A549 (cell line): ENCODE measurements at regions of chr5 and their contacts with region 1.

Region 1: DNA sequence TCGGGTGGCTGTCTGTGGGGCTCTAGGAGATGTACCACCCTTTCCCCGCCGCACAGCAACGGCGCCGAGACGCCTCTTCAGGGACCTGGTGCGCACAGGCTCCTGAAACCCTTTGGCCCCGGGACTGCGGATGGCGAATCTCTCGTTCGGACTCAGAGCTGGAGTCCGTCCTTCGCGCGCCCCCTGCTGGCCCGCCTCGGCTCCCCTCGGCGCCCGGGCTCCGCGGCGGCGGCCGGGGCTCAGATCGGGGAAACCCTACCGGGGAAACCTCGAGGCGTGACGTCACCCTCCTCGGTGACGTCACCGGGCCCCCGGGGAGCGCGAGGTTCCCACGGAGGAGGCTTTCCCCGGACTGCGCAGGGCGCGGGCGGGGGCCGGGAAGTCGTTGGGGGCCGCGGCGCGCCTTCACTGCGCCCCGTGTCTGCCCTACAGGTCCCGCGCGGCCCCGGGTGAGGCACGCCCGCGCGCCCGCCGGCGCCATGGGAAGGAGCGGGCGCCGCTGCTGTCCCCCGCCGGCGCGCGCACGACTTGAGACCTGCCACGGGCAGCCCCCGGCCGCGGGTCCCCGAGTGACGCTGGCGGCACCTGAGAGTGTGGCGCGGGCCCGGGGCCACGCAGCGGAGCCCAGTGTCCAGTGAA is 7.9 kb downstream of the PRR7 start:
- DNase-seq: peak; percentile 89 to 99
- ATAC-seq: peak; percentile 37 to 63
- H3K4me3 ChIP-seq: peak overlapping the region; percentile 61
- H3K27ac ChIP-seq: peak overlapping the region; percentile 71 to 86
- H3K4me1 ChIP-seq: peaks cover 10% of the 10 kb centered on the region
- CTCF ChIP-seq: peak; percentile 94
- EP300 ChIP-seq: no peak
- POLR2A ChIP-seq: no peak
- RAD21 ChIP-seq: peak; percentile 72 to 92

Region 2: GRCh38 chr5:177317959-177318377 is 136.5 kb before region 1 on chr5:
- CTCF ChIA-PET with region 1: interaction called, 17 read pairs
- POLR2A ChIA-PET with region 1: no interaction called
- DNase-seq: peak; percentile 79 to 82
- ATAC-seq: peak; percentile 51 to 76; a peak in 5 of 6 replicates
- H3K4me3 ChIP-seq: no peak overlapping the region
- H3K27ac ChIP-seq: no peak overlapping the region
- H3K4me1 ChIP-seq: peaks cover 2% of the 10 kb centered on the region; the same call in 2 of the 3 replicates
- CTCF ChIP-seq: peak; percentile 96
- EP300 ChIP-seq: no peak
- POLR2A ChIP-seq: no peak
- RAD21 ChIP-seq: peak; percentile 88 to 92

Region 3: DNA sequence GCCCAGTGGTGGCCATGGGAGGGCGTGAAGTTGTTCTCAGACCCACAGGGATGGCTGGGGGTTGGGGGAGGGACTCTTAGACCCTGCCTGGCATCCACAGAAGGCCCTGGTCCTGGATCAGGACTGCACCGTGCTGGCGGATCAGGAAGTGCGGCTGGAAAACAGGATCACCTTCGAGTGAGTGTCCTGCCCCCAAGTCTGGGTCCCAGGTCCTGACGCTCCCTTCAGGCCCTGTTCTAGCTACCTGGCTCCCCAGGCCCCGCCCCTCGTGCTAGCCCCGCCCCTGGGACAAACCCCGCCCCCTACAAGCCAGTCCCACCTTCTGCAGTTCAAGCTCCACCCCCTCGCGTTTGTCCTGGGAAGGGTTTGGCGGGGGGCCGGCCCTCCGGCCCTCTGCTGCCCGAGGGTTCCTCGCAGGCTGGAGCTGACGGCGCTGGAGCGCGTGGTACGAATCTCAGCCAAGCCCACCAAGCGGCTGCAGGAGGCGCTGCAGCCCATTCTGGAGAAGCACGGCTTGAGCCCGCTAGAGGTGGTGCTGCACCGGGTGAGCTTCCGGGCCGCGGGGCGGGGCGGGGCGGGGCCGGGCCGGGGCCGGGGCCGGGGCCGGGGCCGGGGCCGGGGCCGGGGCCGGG is 83.9 kb before region 1 on chr5:
- CTCF ChIA-PET with region 1: interaction called, 30 read pairs
- POLR2A ChIA-PET with region 1: no interaction called
- DNase-seq: peak; percentile 89 to 95
- ATAC-seq: peak; percentile 79 to 88
- H3K4me3 ChIP-seq: peak overlapping the region; percentile 48
- H3K27ac ChIP-seq: peak overlapping the region; percentile 69 to 89
- H3K4me1 ChIP-seq: peaks cover 17% of the 10 kb centered on the region; the same call in 2 of the 3 replicates
- CTCF ChIP-seq: peak; percentile 51
- EP300 ChIP-seq: no peak
- POLR2A ChIP-seq: no peak
- RAD21 ChIP-seq: peak; percentile 58 to 68

Region 4: DNA sequence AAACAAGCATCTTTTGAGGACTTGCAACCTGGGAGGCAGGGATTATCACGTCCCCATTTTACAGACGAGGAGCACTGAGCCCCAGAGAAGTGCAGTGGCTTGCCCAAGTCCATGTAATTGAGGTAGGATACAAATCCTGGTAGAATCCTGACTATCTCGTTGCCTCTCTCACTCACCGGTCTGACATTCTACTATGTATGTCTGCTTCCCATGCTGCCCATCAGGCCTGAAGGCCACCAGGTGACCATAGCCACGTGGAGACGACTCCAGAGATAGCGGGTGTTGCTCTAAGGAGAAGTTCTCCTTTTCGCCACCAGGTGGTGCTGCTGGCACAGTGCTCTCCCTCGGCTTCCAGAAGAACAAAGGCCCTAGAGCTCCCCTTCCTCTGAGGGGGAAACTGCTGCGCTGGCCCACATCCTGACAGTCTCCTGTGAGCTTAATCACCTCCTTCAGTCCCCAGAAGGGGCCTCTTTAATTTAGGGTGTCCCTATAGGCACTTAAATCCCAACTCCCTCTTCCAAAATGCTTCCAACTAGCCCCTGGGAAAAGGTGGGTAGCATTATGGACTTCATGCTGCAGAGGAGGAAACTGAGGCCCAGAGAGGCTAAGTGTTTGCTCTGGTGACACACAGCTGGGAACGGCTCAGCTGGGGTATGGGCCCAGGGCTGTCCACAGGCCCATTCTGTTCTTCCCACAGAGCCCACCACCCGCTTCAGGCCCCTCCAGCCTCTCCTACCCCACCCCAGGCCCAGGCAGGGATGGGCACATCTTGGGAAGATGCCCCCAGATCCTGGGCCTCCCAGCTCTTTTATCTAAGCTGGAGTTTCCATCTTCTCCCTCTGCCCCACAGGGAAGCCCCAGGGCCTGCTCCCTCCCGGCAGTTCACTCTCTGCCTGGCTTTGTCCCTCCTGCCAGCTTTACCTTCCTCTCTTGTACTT is 63.9 kb before region 1 on chr5:
- CTCF ChIA-PET with region 1: interaction called, 359 read pairs
- POLR2A ChIA-PET with region 1: no interaction called
- DNase-seq: peak; percentile 87 to 98
- ATAC-seq: peak; percentile 81 to 94
- H3K4me3 ChIP-seq: no peak overlapping the region
- H3K27ac ChIP-seq: peak overlapping the region; percentile 44 to 72; a peak in 5 of 6 replicates
- H3K4me1 ChIP-seq: peaks cover 18% of the 10 kb centered on the region
- CTCF ChIP-seq: peak; percentile 97
- EP300 ChIP-seq: no peak
- POLR2A ChIP-seq: no peak
- RAD21 ChIP-seq: peak; percentile 89 to 92

Region 5: GRCh38 chr5:177473461-177474001 is 19.0 kb after region 1 on chr5 and contains the start of gene DBN1:
- CTCF ChIA-PET with region 1: interaction called, 220 read pairs
- POLR2A ChIA-PET with region 1: no interaction called
- DNase-seq: peak; percentile 44 to 57
- ATAC-seq: peak; percentile 44 to 48
- H3K4me3 ChIP-seq: peak within 1 kb of the TSS; percentile 99
- H3K27ac ChIP-seq: peak within 1 kb of the TSS; percentile 97 to 99
- H3K4me1 ChIP-seq: peaks cover 57% of the 10 kb centered on the region
- CTCF ChIP-seq: no peak
- EP300 ChIP-seq: no peak
- POLR2A ChIP-seq: peak; percentile 44
- RAD21 ChIP-seq: no peak
- polyA plus RNA-seq, gene DBN1: 32.6 and 47.7 TPM in 2 replicates